Ovary (tissue), 10 donors: ENCODE measurements at regions of chr9 and their contacts with region 1.

Region 1: GRCh38 chr9:114587385-114588202 is at the start of gene ATP6V1G1:
- DNase-seq: peak; percentile 99 to 100 (median 100)
- H3K4me3 ChIP-seq: peak within 1 kb of the TSS; percentile 94
- H3K27ac ChIP-seq: peak within 1 kb of the TSS; percentile 73 to 76
- H3K4me1 ChIP-seq: peaks cover 13% of the 10 kb centered on the region
- H3K27me3 ChIP-seq: no peaks in the 10 kb centered on the region
- CTCF ChIP-seq: peak in 2 of 3 donors; percentile 11 to 27
- EP300 ChIP-seq: no peak
- POLR2A ChIP-seq: peak; percentile 95
- total RNA-seq, gene ATP6V1G1: 93.5 to 211 (median 106) TPM

Region 2: GRCh38 chr9:114505187-114506081 is 82.2 kb before region 1 on chr9 and contains the start of gene WHRN:
- intact Hi-C with region 1: loop called in 1 of 4 experiments (anchors 10 kb)
- DNase-seq: peak; percentile 94 to 97 (median 96)
- H3K4me3 ChIP-seq: peak within 1 kb of the TSS; percentile 80
- H3K27ac ChIP-seq: peak within 1 kb of the TSS; percentile 33 to 60
- H3K4me1 ChIP-seq: peaks cover 8% of the 10 kb centered on the region
- H3K27me3 ChIP-seq: no peaks in the 10 kb centered on the region
- CTCF ChIP-seq: no peak
- EP300 ChIP-seq: no peak
- POLR2A ChIP-seq: peak; percentile 73
- total RNA-seq, gene WHRN: 13.4 to 28.5 (median 25.6) TPM